Right cardiac atrium (tissue), 5 donors: ENCODE measurements at regions of chr22 and their contacts with region 1.

Region 1: GRCh38 chr22:48492366-48493320 is 1335.0 kb downstream of the BRD1 start:
- DNase-seq: peak in 2 of 3 donors; percentile 39 to 82
- ATAC-seq: peak; percentile 60 to 75
- H3K4me3 ChIP-seq: no peak overlapping the region
- H3K27ac ChIP-seq: no peak overlapping the region
- H3K4me1 ChIP-seq: no peaks in the 10 kb centered on the region
- H3K27me3 ChIP-seq: no peaks in the 10 kb centered on the region

Region 2: GRCh38 chr22:46845296-46846149 is 1647.1 kb before region 1 on chr22:
- intact Hi-C with region 1: loop called in 1 of 4 experiments (anchors 10 kb)
- DNase-seq: peak in 2 of 3 donors; percentile 65 to 69
- ATAC-seq: peak; percentile 44 to 56
- H3K4me3 ChIP-seq: peak overlapping the region; percentile 45
- H3K27ac ChIP-seq: no peak overlapping the region
- H3K4me1 ChIP-seq: peaks cover 2% of the 10 kb centered on the region
- H3K27me3 ChIP-seq: no peaks in the 10 kb centered on the region